HEK293T (cell line): ENCODE measurements at regions of chr5 and their contacts with region 1.

Region 1: GRCh38 chr5:78964887-78965286 is 20.2 kb downstream of the ARSB start:
- DNase-seq: peak; percentile 32

Region 2: DNA sequence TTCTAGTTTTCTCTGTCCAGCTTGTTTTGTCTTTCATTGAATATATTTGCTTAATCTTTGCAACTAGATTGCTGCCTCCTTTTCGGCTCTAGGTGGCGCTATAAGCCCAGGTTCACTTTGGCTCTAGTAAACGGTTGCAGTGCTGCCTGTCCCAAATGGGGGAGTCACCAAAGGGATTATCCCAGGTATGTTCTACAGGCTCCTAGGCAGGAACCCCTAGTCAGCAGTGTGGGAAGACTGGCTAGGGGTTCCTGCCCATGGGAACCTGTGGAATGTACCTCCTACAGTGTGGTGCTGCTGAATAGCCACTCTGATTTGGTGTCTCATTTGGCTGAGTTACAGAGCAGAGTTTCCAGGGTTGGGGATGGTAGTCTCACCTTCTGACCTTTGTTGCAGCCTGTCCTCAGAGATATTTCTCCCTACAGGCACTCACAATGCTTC is 64.9 kb before region 1 on chr5:
- CTCF ChIA-PET with region 1: interaction called, 15 read pairs
- POLR2A ChIA-PET with region 1: interaction called, 3 read pairs
- DNase-seq: peak; percentile 55

Region 3: DNA sequence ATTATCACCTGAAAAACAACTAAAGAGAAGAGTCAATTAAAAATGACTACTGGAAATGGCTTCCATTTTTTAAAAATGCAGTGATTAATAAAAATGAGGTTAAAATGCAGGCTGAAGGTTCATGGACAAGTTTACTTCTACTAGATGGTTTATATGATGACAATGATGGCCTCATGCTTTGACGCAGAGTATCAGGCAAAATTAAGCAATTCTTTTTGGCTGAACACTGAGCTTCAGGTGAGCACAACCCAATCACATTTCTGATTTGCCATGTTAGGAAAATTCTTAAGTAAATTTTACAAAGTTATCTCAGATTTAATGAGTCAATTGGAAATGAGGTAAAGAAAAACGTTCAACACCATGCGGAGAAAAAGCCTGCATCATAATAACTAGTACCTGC is 82.3 kb after region 1 on chr5:
- CTCF ChIA-PET with region 1: no interaction called
- POLR2A ChIA-PET with region 1: no interaction called
- DNase-seq: no peak